Activated B cell treated with CpG ODN at 0.5 μM for 24 hours (primary cell): ENCODE measurements at regions of chr17 and their contacts with region 1.

Region 1: DNA sequence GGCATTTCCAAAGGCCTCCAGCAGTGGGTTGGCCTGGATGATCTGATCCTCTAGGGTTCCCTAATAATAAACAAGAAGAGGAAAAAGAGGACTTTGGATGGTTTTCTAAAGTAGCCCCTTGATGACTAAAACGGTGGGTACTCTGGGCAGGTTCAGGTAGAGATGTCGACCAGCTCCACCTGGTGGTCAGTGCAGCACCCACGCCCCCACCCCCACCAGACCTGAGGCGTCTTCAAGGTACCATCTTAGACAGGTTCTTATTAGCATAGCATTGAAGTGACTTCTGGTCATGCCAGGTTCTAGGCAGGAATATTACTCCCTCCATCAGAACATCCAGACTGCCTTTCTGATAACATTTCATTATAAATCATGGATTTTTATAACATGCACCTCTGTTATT is 15.0 kb downstream of the MYH13 start:
- DNase-seq: no peak
- ATAC-seq: peak; percentile 49
- H3K4me3 Mint-ChIP-seq: no peak overlapping the region
- H3K27ac Mint-ChIP-seq: no peak overlapping the region
- H3K4me1 Mint-ChIP-seq: no peaks in the 10 kb centered on the region
- H3K27me3 Mint-ChIP-seq: peaks cover 4% of the 10 kb centered on the region
- CTCF ChIP-seq: no peak

Region 2: DNA sequence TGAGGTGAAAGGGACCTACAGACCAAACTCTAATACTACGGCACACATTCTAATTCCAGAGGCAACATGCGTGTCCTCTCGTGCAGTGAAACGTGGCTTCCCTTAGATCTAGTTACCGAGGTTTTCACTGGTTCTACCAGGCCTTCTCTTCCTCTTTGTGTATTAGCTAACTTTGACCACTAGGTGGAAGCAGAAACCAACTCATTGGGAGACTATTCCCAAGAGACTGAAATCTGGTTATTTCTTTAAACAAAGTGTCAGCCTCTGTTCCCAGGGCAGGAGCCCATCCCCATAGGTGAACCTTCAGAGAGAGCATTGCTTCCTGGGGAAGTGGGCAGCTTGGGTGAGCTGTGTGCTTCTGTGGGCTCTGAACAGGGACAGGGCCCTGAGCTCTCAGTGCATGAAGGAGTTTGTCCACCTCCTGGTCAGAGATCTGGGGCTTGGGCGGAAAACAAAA is 433.0 kb before region 1 on chr17:
- CTCF ChIA-PET with region 1: interaction called, 4 read pairs
- POLR2A ChIA-PET with region 1: no interaction called
- intact Hi-C with region 1: loop called (anchors 1 kb)
- DNase-seq: peak; percentile 31
- ATAC-seq: peak; percentile 77
- H3K4me3 Mint-ChIP-seq: no peak overlapping the region
- H3K27ac Mint-ChIP-seq: no peak overlapping the region
- H3K4me1 Mint-ChIP-seq: peaks cover 5% of the 10 kb centered on the region
- H3K27me3 Mint-ChIP-seq: no peaks in the 10 kb centered on the region
- CTCF ChIP-seq: peak; percentile 87

Region 3: GRCh38 chr17:9959377-9959981 is 398.3 kb before region 1 on chr17:
- CTCF ChIA-PET with region 1: no interaction called
- POLR2A ChIA-PET with region 1: no interaction called
- intact Hi-C with region 1: loop called (anchors 2 kb)
- DNase-seq: no peak
- ATAC-seq: no peak
- H3K4me3 Mint-ChIP-seq: no peak overlapping the region
- H3K27ac Mint-ChIP-seq: no peak overlapping the region
- H3K4me1 Mint-ChIP-seq: no peaks in the 10 kb centered on the region
- H3K27me3 Mint-ChIP-seq: peaks cover 7% of the 10 kb centered on the region
- CTCF ChIP-seq: no peak

Region 4: DNA sequence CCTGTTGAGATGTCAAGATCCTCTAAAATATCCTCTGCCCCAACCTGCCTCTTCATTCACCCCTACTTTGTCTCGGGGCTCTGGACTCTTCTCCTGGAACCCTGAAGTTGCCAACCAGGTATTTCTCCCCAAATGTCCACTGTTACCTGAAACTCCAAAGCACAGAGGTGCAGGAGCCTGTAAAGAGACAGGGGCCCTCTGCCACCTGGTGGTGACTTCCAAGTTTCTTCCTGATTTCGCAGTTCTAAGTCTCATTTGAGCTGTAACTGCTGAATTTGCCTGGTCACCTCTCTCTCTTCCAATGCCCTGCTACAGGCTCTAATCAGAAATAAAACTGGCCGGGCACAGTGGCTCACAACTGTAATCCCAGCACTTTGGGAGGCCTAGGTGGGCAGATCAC is 375.6 kb before region 1 on chr17:
- CTCF ChIA-PET with region 1: no interaction called
- POLR2A ChIA-PET with region 1: no interaction called
- intact Hi-C with region 1: loop called (anchors 5 kb)
- DNase-seq: no peak
- ATAC-seq: no peak
- H3K4me3 Mint-ChIP-seq: no peak overlapping the region
- H3K27ac Mint-ChIP-seq: no peak overlapping the region
- H3K4me1 Mint-ChIP-seq: peaks cover 5% of the 10 kb centered on the region
- H3K27me3 Mint-ChIP-seq: no peaks in the 10 kb centered on the region
- CTCF ChIP-seq: no peak

Region 5: DNA sequence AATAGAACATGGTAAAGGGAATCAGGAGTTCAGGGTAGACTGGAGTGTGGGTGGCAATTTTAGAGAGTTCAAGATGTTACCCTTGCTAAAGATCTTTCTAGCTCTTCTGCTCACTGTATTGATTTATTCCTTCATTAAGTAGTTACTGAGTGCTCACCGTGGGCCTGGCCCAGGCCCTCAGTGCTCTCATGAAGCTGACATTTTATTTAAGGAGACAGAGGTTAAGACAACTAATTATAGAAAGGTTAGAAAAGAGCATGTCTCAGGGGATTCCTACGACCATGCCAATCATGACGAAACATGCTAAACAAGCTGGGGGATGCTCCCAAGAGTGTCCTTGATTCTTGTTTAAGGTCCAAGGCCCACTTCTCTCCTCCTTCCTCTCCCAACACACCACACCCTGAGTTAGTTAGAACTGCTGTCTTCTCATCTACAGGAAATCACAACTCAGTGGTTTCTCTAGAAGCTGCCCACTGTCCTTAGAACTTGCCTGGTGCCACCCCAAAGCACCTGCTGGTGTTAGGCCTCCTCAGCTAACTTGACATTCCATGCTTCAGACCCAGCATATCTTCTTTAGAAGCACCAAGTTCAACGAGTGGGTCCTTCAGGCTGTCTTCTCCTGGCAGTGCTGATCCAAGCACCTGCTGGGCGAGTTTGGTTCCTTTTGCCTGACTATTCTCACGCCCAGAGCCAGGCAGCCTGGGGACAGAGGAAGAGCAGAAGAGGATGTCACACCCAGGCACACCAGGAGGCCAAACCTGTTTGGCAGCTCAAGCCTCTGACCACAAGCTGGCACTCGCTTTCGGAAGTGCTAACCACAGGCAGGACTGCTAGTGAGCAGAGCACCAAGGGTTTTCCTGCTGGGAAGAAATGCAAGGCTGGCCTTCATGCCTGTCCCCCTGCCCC is 238.3 kb before region 1 on chr17:
- CTCF ChIA-PET with region 1: no interaction called
- POLR2A ChIA-PET with region 1: no interaction called
- intact Hi-C with region 1: no loop called
- DNase-seq: no peak
- ATAC-seq: no peak
- H3K4me3 Mint-ChIP-seq: peak overlapping the region; percentile 64
- H3K27ac Mint-ChIP-seq: peak overlapping the region; percentile 67
- H3K4me1 Mint-ChIP-seq: peaks cover 84% of the 10 kb centered on the region
- H3K27me3 Mint-ChIP-seq: peaks cover 2% of the 10 kb centered on the region
- CTCF ChIP-seq: no peak

Region 6: DNA sequence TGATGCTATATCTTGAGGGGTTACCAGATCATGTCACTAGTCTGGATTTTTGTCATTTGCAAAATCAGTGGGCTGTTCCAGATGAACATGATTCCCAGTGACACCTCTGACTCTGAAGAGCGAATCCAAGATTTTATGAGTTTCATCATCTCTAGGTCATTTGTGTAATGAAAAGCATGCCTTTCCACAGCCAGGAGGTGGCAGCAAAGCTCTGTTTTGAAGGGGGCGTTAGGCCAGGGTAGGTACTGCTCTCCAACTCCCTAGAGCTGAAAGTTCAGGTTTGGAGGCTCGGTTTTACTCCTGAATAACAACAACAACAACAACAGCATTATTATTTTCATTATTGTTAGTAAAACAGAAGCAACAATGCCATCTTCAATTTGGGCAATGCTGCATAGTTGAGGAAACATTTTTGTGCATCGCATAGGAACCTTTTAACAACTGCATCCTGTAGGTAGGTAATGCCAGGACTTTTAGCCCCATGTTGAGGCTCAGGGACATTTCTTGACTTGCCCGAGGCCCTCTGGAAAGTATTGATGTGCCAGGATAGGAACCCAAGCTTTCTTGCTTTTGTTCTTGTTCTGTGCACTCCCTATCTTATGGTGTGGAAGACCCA is 61.9 kb before region 1 on chr17:
- CTCF ChIA-PET with region 1: no interaction called
- POLR2A ChIA-PET with region 1: no interaction called
- intact Hi-C with region 1: loop called (anchors 2 kb)
- DNase-seq: no peak
- ATAC-seq: peak; percentile 49
- H3K4me3 Mint-ChIP-seq: no peak overlapping the region
- H3K27ac Mint-ChIP-seq: no peak overlapping the region
- H3K4me1 Mint-ChIP-seq: peaks cover 8% of the 10 kb centered on the region
- H3K27me3 Mint-ChIP-seq: peaks cover 10% of the 10 kb centered on the region
- CTCF ChIP-seq: no peak

Region 7: GRCh38 chr17:10327640-10328039 is 30.1 kb before region 1 on chr17:
- CTCF ChIA-PET with region 1: no interaction called
- POLR2A ChIA-PET with region 1: no interaction called
- intact Hi-C with region 1: loop called (anchors 1 kb)
- DNase-seq: peak; percentile 55
- ATAC-seq: peak; percentile 62
- H3K4me3 Mint-ChIP-seq: no peak overlapping the region
- H3K27ac Mint-ChIP-seq: no peak overlapping the region
- H3K4me1 Mint-ChIP-seq: no peaks in the 10 kb centered on the region
- H3K27me3 Mint-ChIP-seq: peaks cover 10% of the 10 kb centered on the region
- CTCF ChIP-seq: peak; percentile 76

Region 8: GRCh38 chr17:10370209-10370608 is 12.4 kb after region 1 on chr17:
- CTCF ChIA-PET with region 1: no interaction called
- POLR2A ChIA-PET with region 1: no interaction called
- intact Hi-C with region 1: no loop called
- DNase-seq: no peak
- ATAC-seq: no peak
- H3K4me3 Mint-ChIP-seq: no peak overlapping the region
- H3K27ac Mint-ChIP-seq: no peak overlapping the region
- H3K4me1 Mint-ChIP-seq: no peaks in the 10 kb centered on the region
- H3K27me3 Mint-ChIP-seq: peaks cover 2% of the 10 kb centered on the region
- CTCF ChIP-seq: no peak